ENCODE measurements at regions of chr4 and their contacts with region 1.

Region 1: GRCh38 chr4:109554971-109555370 is 5.1 kb upstream of the MCUB start:
- DNase-seq: no peak
- H3K4me3 Mint-ChIP-seq: no peak overlapping the region
- H3K27ac Mint-ChIP-seq: no peak overlapping the region
- H3K4me1 Mint-ChIP-seq: no peaks in the 10 kb centered on the region
- H3K27me3 Mint-ChIP-seq: no peaks in the 10 kb centered on the region
- CTCF ChIP-seq: no peak

Region 2: DNA sequence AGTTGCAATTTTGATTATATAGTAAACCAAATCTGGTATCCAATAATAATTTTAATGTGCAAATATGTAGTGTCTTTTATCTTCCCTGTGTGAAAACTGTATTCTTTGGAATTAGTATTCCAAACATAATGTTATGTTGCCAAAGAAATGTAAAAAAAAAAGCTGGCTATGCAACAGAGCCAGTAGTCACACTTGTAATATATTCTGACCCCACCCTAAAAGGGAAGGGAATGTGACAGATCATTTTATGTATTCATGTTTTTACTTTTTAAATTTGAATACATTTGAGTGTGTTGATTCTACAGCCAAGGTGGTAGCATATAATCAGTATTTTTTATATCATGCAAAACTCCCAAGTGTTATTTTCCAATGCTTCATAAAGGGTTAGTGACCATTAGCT is 22.8 kb before region 1 on chr4:
- CTCF ChIA-PET with region 1: no interaction called
- intact Hi-C with region 1: loop called (anchors 1 kb)
- DNase-seq: no peak
- H3K4me3 Mint-ChIP-seq: no peak overlapping the region
- H3K27ac Mint-ChIP-seq: no peak overlapping the region
- H3K4me1 Mint-ChIP-seq: no peaks in the 10 kb centered on the region
- H3K27me3 Mint-ChIP-seq: no peaks in the 10 kb centered on the region
- CTCF ChIP-seq: no peak

Region 3: DNA sequence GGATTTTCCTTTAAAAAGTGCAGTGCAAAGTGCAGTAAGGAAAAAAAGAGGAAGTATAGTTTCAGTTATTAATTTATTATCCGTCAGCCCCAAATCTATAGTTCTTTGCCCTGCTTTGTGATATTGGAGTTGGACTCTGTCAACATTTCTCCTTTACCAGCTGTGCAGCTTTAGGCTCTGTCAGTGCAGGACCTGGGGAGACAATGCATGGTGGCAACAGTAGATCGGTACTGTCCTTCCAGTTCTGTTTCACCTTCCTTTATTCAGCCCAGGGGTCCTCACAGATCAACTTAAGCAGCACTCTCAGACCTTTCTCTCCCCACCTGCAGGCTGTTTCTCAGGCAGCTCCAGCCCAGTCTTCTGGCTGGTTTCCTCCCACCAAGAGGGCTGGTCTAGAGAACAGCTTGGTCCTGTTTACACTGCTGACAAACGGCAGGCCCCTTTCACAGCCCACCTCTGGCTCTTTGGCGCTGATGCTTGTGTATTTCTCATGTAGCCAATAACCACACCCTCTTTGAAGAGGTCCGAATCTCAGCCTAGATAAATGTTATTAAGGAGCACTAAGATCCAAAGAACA is 76.6 kb after region 1 on chr4:
- CTCF ChIA-PET with region 1: no interaction called
- intact Hi-C with region 1: no loop called
- DNase-seq: no peak
- H3K4me3 Mint-ChIP-seq: no peak overlapping the region
- H3K27ac Mint-ChIP-seq: no peak overlapping the region
- H3K4me1 Mint-ChIP-seq: no peaks in the 10 kb centered on the region
- H3K27me3 Mint-ChIP-seq: no peaks in the 10 kb centered on the region
- CTCF ChIP-seq: no peak